CD4-positive, alpha-beta T cell (primary cell): ENCODE measurements at regions of chr12 and their contacts with region 1.

Region 1: GRCh38 chr12:54622459-54623183 is 12.1 kb downstream of the LACRT start:
- DNase-seq: no peak
- ATAC-seq: no peak
- H3K4me3 ChIP-seq: no peak overlapping the region
- H3K4me3 Mint-ChIP-seq: no peak overlapping the region
- H3K27ac ChIP-seq: no peak overlapping the region
- H3K27ac Mint-ChIP-seq: no peak overlapping the region
- H3K4me1 ChIP-seq: no peaks in the 10 kb centered on the region
- H3K4me1 Mint-ChIP-seq: no peaks in the 10 kb centered on the region
- H3K27me3 ChIP-seq: peaks cover 9 to 29% of the 10 kb centered on the region in 2 experiments
- H3K27me3 Mint-ChIP-seq: peaks cover 78% of the 10 kb centered on the region
- CTCF ChIP-seq: peak; percentile 38

Region 2: DNA sequence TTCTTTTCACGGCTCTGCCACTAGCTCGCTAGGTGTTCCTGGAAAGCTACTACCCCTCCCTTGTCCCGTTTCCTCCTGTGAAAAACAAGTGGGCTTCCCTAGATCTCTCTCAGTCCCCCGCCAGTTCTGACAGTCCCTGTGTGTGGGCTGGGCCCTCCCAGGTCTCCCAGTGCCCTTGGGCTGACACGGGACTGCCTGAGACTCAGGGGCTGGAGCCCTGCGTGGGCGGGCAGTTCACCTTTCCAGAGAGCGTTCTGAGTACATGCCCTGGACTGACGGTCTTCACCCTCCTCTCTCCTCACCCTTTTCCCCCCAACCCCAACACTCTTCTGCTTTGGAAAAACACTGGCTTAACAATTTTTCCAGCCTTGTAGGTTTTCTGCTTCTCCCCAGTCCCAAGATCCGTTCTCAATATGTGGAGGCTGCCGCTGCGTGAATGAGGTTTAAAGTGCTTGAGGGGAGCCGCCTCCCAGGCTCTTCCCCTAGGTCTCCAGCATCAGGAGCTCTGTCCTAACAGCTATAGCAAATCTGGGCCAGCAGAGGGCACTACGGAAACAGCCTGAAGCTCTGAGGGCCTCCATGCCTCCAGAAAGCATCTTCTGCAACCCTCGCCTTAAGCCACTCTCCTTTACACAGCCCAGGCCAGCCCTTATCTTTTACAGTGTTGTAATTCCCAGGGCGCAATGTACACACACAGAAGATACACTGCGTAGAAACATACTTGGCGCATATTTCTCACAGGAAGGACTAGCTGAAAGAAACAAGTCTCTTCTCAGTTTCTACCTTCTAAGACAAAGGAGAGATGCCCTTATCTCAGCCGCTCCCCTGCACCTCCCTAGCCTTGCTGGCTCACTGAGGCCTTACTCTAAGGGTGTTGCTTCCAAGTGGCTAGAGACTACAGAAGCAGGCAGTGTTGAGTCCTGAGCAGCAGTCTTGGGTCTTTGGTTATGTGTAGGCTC is 36.0 kb after region 1 on chr12:
- CTCF ChIA-PET with region 1: no interaction called
- POLR2A ChIA-PET with region 1: no interaction called
- intact Hi-C with region 1: loop called in 1 of 2 experiments (anchors 1 kb)
- DNase-seq: peak in 13 of 14 experiments; percentile 3 to 56 (median 21)
- ATAC-seq: no peak
- H3K4me3 ChIP-seq: no peak overlapping the region
- H3K4me3 Mint-ChIP-seq: no peak overlapping the region
- H3K27ac ChIP-seq: no peak overlapping the region
- H3K27ac Mint-ChIP-seq: no peak overlapping the region
- H3K4me1 ChIP-seq: no peaks in the 10 kb centered on the region
- H3K4me1 Mint-ChIP-seq: no peaks in the 10 kb centered on the region
- H3K27me3 ChIP-seq: peaks cover 8 to 9% of the 10 kb centered on the region in 2 experiments
- H3K27me3 Mint-ChIP-seq: peaks cover 48% of the 10 kb centered on the region
- CTCF ChIP-seq: peak; percentile 49

Region 3: GRCh38 chr12:54704202-54704601 is 81.6 kb after region 1 on chr12:
- CTCF ChIA-PET with region 1: no interaction called
- POLR2A ChIA-PET with region 1: no interaction called
- intact Hi-C with region 1: no loop called
- DNase-seq: peak in 1 of 14 experiments; percentile 7
- ATAC-seq: no peak
- H3K4me3 ChIP-seq: no peak overlapping the region
- H3K4me3 Mint-ChIP-seq: no peak overlapping the region
- H3K27ac ChIP-seq: no peak overlapping the region
- H3K27ac Mint-ChIP-seq: no peak overlapping the region
- H3K4me1 ChIP-seq: no peaks in the 10 kb centered on the region
- H3K4me1 Mint-ChIP-seq: no peaks in the 10 kb centered on the region
- H3K27me3 ChIP-seq: no peaks in the 10 kb centered on the region
- H3K27me3 Mint-ChIP-seq: peaks cover 3% of the 10 kb centered on the region
- CTCF ChIP-seq: no peak

Region 4: DNA sequence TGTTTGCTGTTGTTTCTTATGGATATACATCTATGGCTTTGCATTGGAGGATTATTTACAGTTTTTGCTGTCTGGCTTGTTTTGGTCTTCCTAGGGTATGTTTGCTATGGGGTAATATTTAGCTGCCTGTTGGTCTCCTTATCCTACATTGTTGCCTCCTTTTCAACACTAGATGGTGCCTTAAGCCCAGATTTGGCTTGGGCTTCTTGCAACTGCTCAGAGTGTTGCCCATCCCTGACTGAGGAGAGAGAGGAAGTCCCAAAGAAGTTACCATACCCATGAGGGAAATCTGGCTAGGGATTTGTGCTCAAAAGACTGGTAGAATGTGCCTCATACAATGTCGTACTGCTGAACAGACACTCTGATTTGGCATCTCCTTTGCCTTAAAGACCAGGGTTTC is 137.1 kb after region 1 on chr12:
- CTCF ChIA-PET with region 1: no interaction called
- POLR2A ChIA-PET with region 1: no interaction called
- intact Hi-C with region 1: no loop called
- DNase-seq: peak in 4 of 14 experiments; percentile 16 to 46 (median 42)
- ATAC-seq: no peak
- H3K4me3 ChIP-seq: no peak overlapping the region
- H3K4me3 Mint-ChIP-seq: no peak overlapping the region
- H3K27ac ChIP-seq: no peak overlapping the region
- H3K27ac Mint-ChIP-seq: no peak overlapping the region
- H3K4me1 ChIP-seq: no peaks in the 10 kb centered on the region
- H3K4me1 Mint-ChIP-seq: no peaks in the 10 kb centered on the region
- H3K27me3 ChIP-seq: no peaks in the 10 kb centered on the region
- H3K27me3 Mint-ChIP-seq: no peaks in the 10 kb centered on the region
- CTCF ChIP-seq: no peak